ENCODE measurements at regions of chr1 and their contacts with region 1.

Region 1: DNA sequence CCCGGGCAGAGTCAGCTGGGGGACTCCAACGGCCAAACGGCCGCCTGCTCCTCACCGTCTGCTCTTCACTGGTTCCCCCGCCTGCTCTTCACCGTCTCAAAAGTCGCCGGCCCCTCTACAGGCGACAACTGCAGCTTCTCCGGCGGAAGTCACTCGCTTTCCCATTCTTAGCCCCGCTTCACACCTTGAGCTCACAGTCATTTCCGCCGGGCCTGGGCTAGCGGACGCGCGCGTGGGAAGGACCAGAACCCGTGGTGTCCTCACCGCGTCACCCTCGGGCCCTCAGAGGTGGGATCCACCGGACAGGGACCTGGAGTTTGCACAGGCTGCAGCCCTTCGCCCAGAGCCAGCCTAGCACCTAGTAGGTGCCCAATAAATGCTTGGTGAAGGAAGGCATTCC is 27.9 kb upstream of the HJV start:
- DNase-seq: no peak
- H3K4me3 ChIP-seq: no peak overlapping the region
- H3K27ac ChIP-seq: no peak overlapping the region
- H3K27me3 ChIP-seq: no peaks in the 10 kb centered on the region
- CTCF ChIP-seq: no peak

Region 2: GRCh38 chr1:145885738-145886287 is 163.6 kb before region 1 on chr1 and contains the start of gene ANKRD35:
- CTCF ChIA-PET with region 1: no interaction called
- POLR2A ChIA-PET with region 1: no interaction called
- DNase-seq: no peak
- H3K4me3 ChIP-seq: peak within 1 kb of the TSS; percentile 73
- H3K27ac ChIP-seq: no peak within 1 kb of the TSS
- H3K27me3 ChIP-seq: no peaks in the 10 kb centered on the region
- CTCF ChIP-seq: no peak
- polyA plus RNA-seq, gene ANKRD35: 2.6 and 2.7 TPM in 2 replicates

Region 3: DNA sequence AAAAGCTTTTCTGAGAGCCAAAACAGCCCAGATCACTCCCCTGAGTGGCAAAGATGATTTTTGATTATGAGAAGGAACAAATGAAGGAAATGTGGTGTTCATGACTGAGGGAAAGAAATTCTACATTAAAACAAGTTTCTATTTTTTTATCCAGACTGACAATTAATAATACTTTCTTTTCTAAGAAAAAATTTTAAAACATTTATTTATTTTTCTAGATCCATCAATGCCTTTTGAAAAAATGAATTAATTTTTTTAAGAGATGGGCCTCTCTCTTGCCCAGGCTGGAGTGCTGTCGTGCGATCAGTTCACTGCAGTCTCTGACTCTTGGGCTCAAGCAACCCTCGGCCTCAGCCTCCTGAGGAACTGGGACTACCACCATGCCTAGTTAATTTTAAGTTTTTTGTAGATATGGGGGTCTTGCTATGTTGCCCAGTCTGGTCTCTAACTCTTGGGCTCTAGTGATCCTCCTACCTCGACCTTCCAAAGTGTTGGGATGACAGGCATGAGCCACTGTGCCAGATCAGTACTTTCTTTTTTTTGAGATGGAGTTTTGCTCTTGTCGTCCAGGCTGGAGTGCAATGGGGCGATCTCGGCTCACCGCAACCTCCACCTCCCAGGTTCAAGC is 41.8 kb before region 1 on chr1:
- CTCF ChIA-PET with region 1: no interaction called
- POLR2A ChIA-PET with region 1: no interaction called
- DNase-seq: no peak
- H3K4me3 ChIP-seq: no peak overlapping the region
- H3K27ac ChIP-seq: no peak overlapping the region
- H3K27me3 ChIP-seq: no peaks in the 10 kb centered on the region
- CTCF ChIP-seq: no peak

Region 4: DNA sequence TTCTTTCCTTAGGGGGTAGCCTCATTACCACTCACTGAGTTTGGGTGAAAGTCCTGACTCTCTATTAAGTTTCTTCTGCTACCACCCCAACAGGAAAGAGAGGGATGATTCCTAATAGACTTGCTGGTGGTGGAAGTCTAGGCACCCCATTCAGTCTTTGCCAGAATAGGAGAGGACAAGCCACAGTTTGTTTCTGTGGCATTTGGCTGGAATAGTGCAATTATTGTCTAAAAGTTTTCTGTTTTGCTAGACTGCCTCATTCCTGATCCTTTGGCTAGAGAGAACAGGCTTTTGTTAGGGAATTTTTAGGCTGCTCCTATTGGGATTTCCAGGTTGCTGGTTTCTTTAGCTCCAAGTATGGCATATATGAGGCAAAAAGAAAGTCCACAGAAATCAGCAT is 18.0 kb before region 1 on chr1:
- CTCF ChIA-PET with region 1: interaction called, 9 read pairs
- POLR2A ChIA-PET with region 1: interaction called, 71 read pairs
- DNase-seq: no peak
- H3K4me3 ChIP-seq: no peak overlapping the region
- H3K27ac ChIP-seq: no peak overlapping the region
- H3K27me3 ChIP-seq: no peaks in the 10 kb centered on the region
- CTCF ChIP-seq: no peak

Region 5: GRCh38 chr1:146036965-146037646 is 12.3 kb before region 1 on chr1:
- CTCF ChIA-PET with region 1: interaction called, 9 read pairs
- POLR2A ChIA-PET with region 1: interaction called, 71 read pairs
- DNase-seq: peak; percentile 78
- H3K4me3 ChIP-seq: peak overlapping the region; percentile 85
- H3K27ac ChIP-seq: peak overlapping the region; percentile 83
- H3K27me3 ChIP-seq: no peaks in the 10 kb centered on the region
- CTCF ChIP-seq: no peak

Measured in AG04450 (cell line).